Activated CD4-positive, alpha-beta memory T cell treated with anti-CD3 and anti-CD28 coated beads for 36 hours (primary cell): ENCODE measurements at regions of chr11 and their contacts with region 1.

Region 1: GRCh38 chr11:1852877-1853276 is at the start of gene LSP1:
- DNase-seq: peak; percentile 93
- H3K4me3 Mint-ChIP-seq: peak within 1 kb of the TSS; percentile 92
- H3K27ac Mint-ChIP-seq: peak within 1 kb of the TSS; percentile 97
- H3K4me1 Mint-ChIP-seq: peaks cover 66% of the 10 kb centered on the region
- H3K27me3 Mint-ChIP-seq: no peaks in the 10 kb centered on the region
- total RNA-seq, gene LSP1: 179 to 181 TPM

Region 2: DNA sequence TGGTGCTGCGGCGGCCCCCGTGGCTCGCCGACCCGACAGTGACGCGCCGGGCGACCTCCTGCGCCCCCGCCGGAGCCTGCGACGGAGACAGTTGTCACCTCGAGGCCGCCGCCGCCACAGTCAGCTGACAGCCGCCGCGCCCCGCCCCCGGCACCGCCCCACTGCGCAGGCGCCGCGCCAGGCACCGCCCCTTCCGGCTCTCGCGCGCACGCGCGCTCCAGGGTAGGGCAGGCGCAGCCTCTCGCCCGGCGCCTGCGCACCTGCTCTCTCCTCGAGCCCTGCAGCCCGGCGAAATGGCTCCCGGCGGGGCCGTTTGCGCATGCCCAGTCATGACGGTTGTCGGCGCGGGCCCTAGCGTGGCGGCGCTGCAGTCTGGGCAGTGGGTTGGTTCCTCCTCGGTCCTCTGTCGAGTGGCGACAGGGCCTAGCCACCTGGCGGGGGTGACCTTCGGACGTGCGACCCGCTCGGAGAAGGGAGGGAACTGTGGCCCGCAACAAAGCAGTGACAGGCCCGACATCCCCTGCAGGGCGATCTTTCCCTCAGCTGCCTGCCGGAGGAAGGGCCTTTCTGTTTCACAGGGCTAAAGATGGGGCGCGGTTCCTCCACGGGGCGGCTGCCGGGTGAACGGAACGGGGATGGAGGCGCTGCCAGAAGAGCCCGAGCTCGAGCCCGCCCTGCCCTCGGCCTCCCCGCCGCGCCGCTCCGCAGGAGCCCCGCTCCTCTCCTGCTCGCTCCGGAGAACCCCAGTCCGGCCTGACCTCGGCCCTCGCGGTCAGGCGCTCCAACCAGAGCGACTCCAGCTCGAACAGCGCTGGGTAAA is 543.2 kb before region 1 on chr11 and contains the start of gene TOLLIP:
- CTCF ChIA-PET with region 1: no interaction called
- POLR2A ChIA-PET with region 1: no interaction called
- intact Hi-C with region 1: no loop called
- DNase-seq: peak; percentile 97
- H3K4me3 Mint-ChIP-seq: peak within 1 kb of the TSS; percentile 76
- H3K27ac Mint-ChIP-seq: peak within 1 kb of the TSS; percentile 87
- H3K4me1 Mint-ChIP-seq: peaks cover 37% of the 10 kb centered on the region
- H3K27me3 Mint-ChIP-seq: no peaks in the 10 kb centered on the region
- total RNA-seq, gene TOLLIP: 30.0 to 32.1 TPM

Region 3: DNA sequence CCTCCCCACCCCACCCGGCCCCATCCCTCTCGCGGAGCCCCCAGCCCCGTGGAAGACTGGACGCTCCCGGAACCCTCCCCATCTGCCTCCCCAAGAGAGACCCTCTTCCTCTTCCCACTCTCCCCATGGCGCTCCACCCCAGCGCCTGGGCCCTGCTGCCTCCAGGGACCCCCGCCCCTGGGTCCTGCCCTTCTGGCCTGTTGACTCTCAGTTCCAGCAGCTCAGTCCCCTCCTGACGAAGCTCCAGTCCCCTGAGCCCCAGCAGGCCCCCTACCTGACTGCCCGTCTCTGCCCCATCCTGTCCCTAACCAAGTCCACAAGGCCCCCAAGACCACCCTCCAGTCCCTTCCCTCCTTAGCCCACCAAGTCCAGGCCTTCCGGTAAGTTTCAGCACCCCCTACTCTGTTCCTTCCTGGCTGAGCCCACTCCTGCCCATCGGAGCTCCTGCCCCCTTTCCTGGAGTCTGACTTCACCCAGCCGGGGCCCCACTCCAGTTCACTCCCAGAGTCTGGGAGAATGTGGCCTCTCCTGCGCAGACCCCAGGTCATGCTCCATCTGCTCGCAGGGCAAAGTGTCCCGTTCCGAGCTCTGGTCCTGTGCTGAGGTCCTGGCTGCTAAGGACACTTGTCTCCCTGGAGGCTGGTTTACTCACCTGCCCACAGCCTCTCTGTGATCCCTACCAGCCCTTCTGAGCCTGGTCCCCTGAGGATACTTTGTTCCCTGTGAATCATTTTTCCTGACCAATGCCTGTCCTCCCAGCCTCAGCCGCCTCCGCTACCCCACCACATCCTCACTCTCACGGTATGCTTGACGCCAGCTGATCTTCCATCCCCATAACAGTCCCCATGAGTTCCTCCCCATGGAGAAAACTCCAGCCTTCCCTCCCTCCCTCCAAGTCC is 103.2 kb before region 1 on chr11:
- CTCF ChIA-PET with region 1: no interaction called
- POLR2A ChIA-PET with region 1: no interaction called
- intact Hi-C with region 1: no loop called
- DNase-seq: no peak
- H3K4me3 Mint-ChIP-seq: no peak overlapping the region
- H3K27ac Mint-ChIP-seq: no peak overlapping the region
- H3K4me1 Mint-ChIP-seq: peaks cover 12% of the 10 kb centered on the region
- H3K27me3 Mint-ChIP-seq: peaks cover 13% of the 10 kb centered on the region

Region 4: GRCh38 chr11:1832211-1832919 is 20.5 kb before region 1 on chr11:
- CTCF ChIA-PET with region 1: interaction called, 32 read pairs
- POLR2A ChIA-PET with region 1: no interaction called
- intact Hi-C with region 1: no loop called
- DNase-seq: peak; percentile 66
- H3K4me3 Mint-ChIP-seq: no peak overlapping the region
- H3K27ac Mint-ChIP-seq: no peak overlapping the region
- H3K4me1 Mint-ChIP-seq: no peaks in the 10 kb centered on the region
- H3K27me3 Mint-ChIP-seq: peaks cover 5% of the 10 kb centered on the region

Region 5: DNA sequence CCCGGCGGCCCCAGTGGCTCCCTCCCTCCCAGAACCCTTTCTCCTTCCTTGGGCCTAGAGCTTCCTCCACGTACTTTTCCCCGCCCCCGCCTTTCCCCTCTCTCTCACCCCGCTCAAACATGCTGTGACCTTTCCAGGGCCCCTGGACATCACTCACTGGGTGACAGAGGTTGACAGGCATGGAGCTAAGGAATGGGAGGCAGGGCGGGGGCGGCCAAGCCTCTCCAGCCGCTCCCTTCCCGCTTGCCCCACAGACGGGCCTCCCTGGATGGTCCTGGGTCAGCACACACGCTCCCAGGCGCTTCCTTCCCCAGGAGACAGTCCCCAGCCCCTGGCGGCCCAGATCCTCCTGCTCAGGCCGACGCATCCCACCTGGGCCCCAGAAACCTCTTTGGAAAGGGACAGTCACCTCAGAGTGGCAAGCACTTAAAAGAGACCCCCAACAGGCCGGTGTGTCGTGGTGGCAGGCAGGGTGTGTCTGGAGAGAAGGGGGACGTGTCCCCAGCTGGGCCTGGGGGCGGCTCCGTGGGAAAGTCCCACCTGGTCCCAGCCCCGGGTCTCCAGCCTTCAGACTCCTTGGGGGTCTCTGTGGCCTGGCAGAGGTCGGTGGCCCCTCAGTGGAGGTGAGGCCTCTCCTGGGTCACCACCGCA is 135.9 kb after region 1 on chr11:
- CTCF ChIA-PET with region 1: no interaction called
- POLR2A ChIA-PET with region 1: no interaction called
- intact Hi-C with region 1: no loop called
- DNase-seq: no peak
- H3K4me3 Mint-ChIP-seq: no peak overlapping the region
- H3K27ac Mint-ChIP-seq: no peak overlapping the region
- H3K4me1 Mint-ChIP-seq: no peaks in the 10 kb centered on the region
- H3K27me3 Mint-ChIP-seq: no peaks in the 10 kb centered on the region

Region 6: DNA sequence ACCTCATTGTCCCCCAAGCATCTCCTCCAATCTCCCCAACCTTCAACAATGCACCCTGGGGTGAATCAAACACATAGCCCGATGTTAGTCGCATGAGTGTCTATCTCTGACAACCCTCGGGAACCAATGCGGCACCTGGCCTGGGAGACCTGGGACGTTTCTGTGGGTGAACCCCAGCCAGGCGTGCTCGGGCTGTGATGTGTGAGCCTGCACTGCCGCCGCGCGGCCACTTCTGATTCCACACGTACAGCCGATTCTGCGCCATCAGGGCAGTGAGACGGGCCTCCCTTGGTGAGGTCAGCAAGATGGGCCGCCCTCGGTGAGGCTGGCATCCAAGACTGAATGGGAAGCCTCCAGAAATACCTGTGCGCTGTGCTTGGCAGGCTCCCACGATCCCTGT is 149.9 kb after region 1 on chr11:
- CTCF ChIA-PET with region 1: interaction called, 23 read pairs
- POLR2A ChIA-PET with region 1: no interaction called
- intact Hi-C with region 1: no loop called
- DNase-seq: no peak
- H3K4me3 Mint-ChIP-seq: no peak overlapping the region
- H3K27ac Mint-ChIP-seq: no peak overlapping the region
- H3K4me1 Mint-ChIP-seq: no peaks in the 10 kb centered on the region
- H3K27me3 Mint-ChIP-seq: no peaks in the 10 kb centered on the region

Region 7: GRCh38 chr11:2142762-2143202 is 289.9 kb after region 1 on chr11:
- CTCF ChIA-PET with region 1: interaction called, 4 read pairs
- POLR2A ChIA-PET with region 1: interaction called, 3 read pairs
- intact Hi-C with region 1: loop called (anchors 5 kb)
- DNase-seq: peak; percentile 65
- H3K4me3 Mint-ChIP-seq: peak overlapping the region; percentile 53
- H3K27ac Mint-ChIP-seq: peak overlapping the region; percentile 32
- H3K4me1 Mint-ChIP-seq: peaks cover 33% of the 10 kb centered on the region
- H3K27me3 Mint-ChIP-seq: peaks cover 56% of the 10 kb centered on the region